ENCODE measurements at regions of chr4 and their contacts with region 1.

Region 1: DNA sequence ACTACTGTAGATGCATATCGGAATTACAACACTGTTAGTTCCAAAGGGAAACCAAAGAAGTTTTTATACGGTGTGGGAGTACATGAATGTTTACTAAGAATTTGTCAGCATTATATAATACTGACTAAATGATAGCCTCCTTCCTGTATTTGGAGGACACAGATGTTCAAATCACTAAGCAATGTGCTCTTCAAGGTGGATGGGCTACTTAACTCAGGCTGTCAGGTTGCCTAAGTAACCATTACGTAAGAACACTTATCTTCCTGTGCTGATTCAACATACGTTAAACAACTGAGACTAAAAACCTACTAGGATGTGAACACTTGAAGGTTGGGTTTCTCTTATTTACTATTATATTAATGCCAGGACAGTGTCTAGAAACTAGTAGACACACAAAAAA is 81.9 kb upstream of the HPGD start:
- DNase-seq: peak; percentile 52
- H3K4me3 ChIP-seq: no peak overlapping the region
- H3K27ac ChIP-seq: no peak overlapping the region
- H3K4me1 ChIP-seq: peaks cover 5% of the 10 kb centered on the region
- H3K27me3 ChIP-seq: no peaks in the 10 kb centered on the region
- CTCF ChIP-seq: no peak

Region 2: DNA sequence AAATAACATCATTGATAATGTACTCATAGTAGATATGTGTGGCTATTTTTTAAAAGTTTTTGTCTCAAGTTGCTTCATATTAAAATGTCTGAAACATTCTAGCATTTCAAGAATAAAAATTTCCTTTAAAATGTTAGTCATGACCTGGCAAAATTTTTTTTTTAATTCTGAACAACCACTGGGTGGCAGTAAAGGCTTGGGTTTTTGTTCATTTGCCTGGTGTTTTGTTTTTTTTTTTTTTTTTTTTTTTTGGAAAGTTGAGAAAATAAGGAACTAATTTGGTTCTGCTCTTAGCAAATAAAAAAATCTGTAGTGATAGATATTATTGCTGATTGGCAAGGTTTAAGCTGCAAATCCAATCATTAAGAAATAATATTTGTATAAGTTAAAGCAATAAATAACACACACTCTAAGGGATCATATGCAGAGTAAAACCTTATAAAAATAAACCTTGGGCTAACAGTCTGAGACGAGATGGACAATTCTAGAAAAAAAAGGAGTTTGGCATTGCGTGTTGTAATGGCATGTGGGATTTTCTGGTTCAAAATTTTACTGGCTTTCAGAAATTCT is 239.1 kb before region 1 on chr4:
- dilution Hi-C with region 1: loop called (anchors 25 kb)
- DNase-seq: no peak
- H3K4me3 ChIP-seq: no peak overlapping the region
- H3K27ac ChIP-seq: no peak overlapping the region
- H3K4me1 ChIP-seq: no peaks in the 10 kb centered on the region
- H3K27me3 ChIP-seq: no peaks in the 10 kb centered on the region
- CTCF ChIP-seq: peak in 1 of 3 experiments; percentile 19

Measured in keratinocyte (primary cell).